MCF 10A (cell line): ENCODE measurements at regions of chr1 and their contacts with region 1.

Region 1: DNA sequence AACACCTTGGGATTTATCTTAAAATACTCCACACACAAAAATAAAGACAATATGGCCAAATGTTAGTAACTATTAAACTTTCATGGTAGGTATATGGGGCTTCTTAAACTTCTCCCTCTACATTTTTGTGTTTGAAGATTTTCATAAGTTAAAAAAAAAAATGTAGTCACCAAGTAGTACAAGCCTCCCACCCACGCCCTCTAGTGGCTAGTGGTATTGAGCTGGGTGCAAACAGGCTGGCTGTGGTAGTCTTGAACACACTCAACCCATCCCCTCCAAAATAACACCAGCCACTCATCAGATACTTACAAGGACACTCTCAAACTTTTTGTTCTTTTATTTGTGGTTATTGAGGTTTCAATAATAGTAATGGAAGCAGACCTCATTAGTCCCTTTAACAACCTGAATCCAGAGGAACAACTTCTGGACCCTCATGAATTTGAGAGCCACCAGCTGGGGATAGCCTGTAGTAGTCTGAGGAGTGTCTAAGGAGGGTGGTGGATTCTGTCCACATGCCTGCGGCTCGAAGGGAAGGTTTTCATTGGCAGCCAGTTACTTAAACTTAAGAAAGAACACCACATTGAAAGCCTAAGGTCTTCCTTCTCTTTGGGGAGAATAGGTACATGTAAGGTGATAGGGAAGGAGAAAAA is 15.6 kb downstream of the RD3 start:
- DNase-seq: peak; percentile 93
- H3K4me3 Mint-ChIP-seq: no peak overlapping the region
- H3K27ac Mint-ChIP-seq: no peak overlapping the region
- H3K4me1 Mint-ChIP-seq: peaks cover 8% of the 10 kb centered on the region
- H3K27me3 Mint-ChIP-seq: no peaks in the 10 kb centered on the region
- CTCF ChIP-seq: peak; percentile 98

Region 2: GRCh38 chr1:211492511-211493132 is 16.3 kb after region 1 on chr1:
- CTCF ChIA-PET with region 1: interaction called, 682 read pairs
- POLR2A ChIA-PET with region 1: interaction called, 6 read pairs
- intact Hi-C with region 1: no loop called
- DNase-seq: no peak
- H3K4me3 Mint-ChIP-seq: no peak overlapping the region
- H3K27ac Mint-ChIP-seq: no peak overlapping the region
- H3K4me1 Mint-ChIP-seq: no peaks in the 10 kb centered on the region
- H3K27me3 Mint-ChIP-seq: no peaks in the 10 kb centered on the region
- CTCF ChIP-seq: no peak

Region 3: GRCh38 chr1:211648980-211649934 is 172.9 kb after region 1 on chr1:
- CTCF ChIA-PET with region 1: interaction called, 119 read pairs
- POLR2A ChIA-PET with region 1: interaction called, 3 read pairs
- intact Hi-C with region 1: no loop called
- DNase-seq: no peak
- H3K4me3 Mint-ChIP-seq: no peak overlapping the region
- H3K27ac Mint-ChIP-seq: peak overlapping the region; percentile 1
- H3K4me1 Mint-ChIP-seq: peaks cover 37% of the 10 kb centered on the region
- H3K27me3 Mint-ChIP-seq: no peaks in the 10 kb centered on the region
- CTCF ChIP-seq: peak; percentile 22

Region 4: GRCh38 chr1:211870156-211870555 is 393.8 kb after region 1 on chr1:
- CTCF ChIA-PET with region 1: no interaction called
- POLR2A ChIA-PET with region 1: no interaction called
- intact Hi-C with region 1: no loop called
- DNase-seq: no peak
- H3K4me3 Mint-ChIP-seq: no peak overlapping the region
- H3K27ac Mint-ChIP-seq: no peak overlapping the region
- H3K4me1 Mint-ChIP-seq: no peaks in the 10 kb centered on the region
- H3K27me3 Mint-ChIP-seq: no peaks in the 10 kb centered on the region
- CTCF ChIP-seq: no peak